PC-3 (cell line): ENCODE measurements at regions of chr12 and their contacts with region 1.

Region 1: GRCh38 chr12:96386794-96387193 is 13.4 kb downstream of the CDK17 start:
- DNase-seq: no peak
- ATAC-seq: no peak
- H3K4me3 ChIP-seq: no peak overlapping the region
- H3K27ac ChIP-seq: no peak overlapping the region
- H3K4me1 ChIP-seq: no peaks in the 10 kb centered on the region
- H3K27me3 ChIP-seq: no peaks in the 10 kb centered on the region
- CTCF ChIP-seq: no peak

Region 2: DNA sequence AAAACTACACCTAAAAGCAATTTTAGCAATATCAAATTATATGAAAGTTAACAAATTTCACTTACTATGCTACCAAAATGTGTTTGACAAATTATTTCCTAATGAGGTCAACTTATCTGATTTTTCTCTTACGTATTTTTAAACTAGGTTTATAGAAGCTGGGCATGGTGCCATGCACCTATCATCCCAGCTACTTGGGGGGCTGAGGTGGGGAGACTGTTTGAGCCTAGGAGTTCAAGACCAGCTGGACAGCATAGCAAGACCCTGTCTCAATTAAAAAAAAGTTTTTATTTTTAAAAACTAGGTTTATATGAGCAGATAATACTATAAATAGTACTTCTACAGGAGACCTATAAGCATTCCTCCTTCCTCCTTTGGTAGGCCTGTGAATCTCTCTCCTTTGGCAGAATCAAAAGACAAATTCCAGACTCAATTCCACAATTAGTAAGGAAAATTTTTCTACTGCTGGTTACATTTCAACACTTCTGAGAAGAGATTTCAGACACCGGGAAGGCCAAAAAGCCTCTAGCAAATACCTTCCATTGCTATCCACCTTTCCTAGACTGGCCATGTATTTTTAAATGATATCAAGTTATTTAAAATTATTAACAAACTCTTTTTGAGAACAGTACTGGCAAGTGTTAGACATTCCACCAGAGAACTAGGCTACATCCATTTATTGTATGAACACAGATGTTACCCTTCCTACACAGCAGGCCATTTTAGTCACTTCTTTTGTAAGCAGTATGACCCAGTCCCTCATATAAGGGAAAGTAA is 21.0 kb before region 1 on chr12:
- CTCF ChIA-PET with region 1: no interaction called
- POLR2A ChIA-PET with region 1: interaction called, 14 read pairs
- intact Hi-C with region 1: no loop called
- DNase-seq: no peak
- ATAC-seq: no peak
- H3K4me3 ChIP-seq: no peak overlapping the region
- H3K27ac ChIP-seq: no peak overlapping the region
- H3K4me1 ChIP-seq: peaks cover 9% of the 10 kb centered on the region; the same call in 1 of the 2 replicates
- H3K27me3 ChIP-seq: no peaks in the 10 kb centered on the region
- CTCF ChIP-seq: no peak

Region 3: GRCh38 chr12:96548384-96548783 is 161.6 kb after region 1 on chr12:
- CTCF ChIA-PET with region 1: no interaction called
- POLR2A ChIA-PET with region 1: no interaction called
- intact Hi-C with region 1: no loop called
- DNase-seq: no peak
- ATAC-seq: no peak
- H3K4me3 ChIP-seq: no peak overlapping the region
- H3K27ac ChIP-seq: no peak overlapping the region
- H3K4me1 ChIP-seq: no peaks in the 10 kb centered on the region
- H3K27me3 ChIP-seq: no peaks in the 10 kb centered on the region
- CTCF ChIP-seq: no peak